ENCODE measurements at regions of chr9 and their contacts with region 1.

Region 1: DNA sequence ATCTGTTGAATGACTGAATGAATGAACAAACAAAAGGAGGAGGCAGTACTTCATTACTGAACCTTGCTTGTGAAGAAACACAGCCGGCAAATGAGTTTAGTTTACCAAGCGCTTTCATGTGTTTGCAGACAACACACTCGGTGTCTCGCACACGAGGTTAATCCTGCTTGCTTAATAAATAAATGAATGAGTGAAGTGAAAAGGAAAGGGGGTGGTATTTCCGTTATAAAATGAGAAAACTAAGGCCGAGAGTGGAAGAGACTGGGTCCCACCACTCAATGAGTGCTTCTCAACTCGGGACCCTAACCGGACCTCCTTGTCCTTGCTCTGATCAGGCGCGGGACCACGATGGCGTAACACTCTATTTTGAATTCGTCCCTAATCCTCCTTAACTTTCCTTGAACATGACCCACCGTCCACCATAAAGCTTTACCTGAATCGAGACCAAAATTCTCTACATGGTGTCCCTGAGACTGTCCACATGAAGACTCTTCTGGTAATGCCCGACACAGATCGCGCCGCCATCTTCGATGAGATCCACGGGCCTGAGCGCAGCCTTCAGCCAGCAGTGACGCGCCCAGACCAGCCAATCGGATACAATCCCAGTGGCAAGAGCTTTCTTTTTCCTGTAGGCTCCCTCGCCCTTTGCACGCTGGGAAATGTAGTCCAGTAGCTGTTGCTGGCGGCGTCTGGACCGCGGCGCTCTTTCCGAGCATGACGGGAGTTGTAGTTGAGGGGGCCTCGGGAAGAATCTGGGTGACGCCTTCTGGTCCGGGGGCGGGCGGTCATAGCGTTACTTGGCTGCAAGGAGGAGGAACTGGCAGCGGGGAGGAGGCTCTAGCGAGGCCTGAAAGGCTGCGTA is at the starts of genes MRPL50 and ZNF189:
- DNase-seq: peak; percentile 88
- ATAC-seq: peak; percentile 96
- H3K4me3 Mint-ChIP-seq: peak within 1 kb of the TSS; percentile 93
- H3K27ac Mint-ChIP-seq: peak within 1 kb of the TSS; percentile 99
- H3K4me1 Mint-ChIP-seq: peaks cover 38% of the 10 kb centered on the region
- H3K27me3 Mint-ChIP-seq: no peaks in the 10 kb centered on the region
- total RNA-seq, gene MRPL50: 11.8 to 12.2 TPM
- total RNA-seq, gene ZNF189: 14.6 to 16.0 TPM

Region 2: DNA sequence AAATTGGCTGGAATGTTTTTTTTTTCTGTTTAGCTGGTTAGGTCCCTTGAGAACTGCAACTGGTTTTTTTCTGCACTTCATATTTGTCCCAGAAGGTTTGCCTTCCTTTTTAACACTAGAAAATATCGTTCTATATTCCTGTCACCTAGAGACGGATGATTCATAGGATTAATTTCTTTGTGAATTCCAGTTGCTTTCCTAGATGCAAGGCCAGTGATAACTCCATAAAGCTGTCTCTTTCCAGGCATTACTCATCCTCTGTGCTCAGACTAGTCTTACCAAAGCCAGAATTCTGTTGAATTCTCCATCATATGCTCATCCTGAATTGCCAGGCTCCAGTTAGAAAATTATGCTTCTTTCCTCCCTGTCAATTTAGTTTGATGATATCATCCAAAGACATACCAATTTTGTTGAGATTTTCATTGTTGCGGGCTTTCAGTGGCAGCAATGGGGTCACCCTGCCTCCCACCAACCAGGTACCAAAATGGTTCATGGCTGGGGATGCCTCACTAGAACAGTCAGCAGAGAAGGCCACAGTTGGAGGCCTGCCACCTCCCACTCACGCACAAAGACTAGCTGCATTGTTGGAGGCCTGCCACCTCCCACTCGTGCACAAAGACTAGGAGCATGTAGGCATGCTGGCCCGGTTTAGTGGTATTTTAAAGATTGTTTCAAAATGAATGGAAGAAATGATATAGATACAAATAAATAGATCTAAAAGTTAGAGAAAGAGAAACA is 22.0 kb before region 1 on chr9:
- POLR2A ChIA-PET with region 1: no interaction called
- DNase-seq: no peak
- ATAC-seq: no peak
- H3K4me3 Mint-ChIP-seq: no peak overlapping the region
- H3K27ac Mint-ChIP-seq: no peak overlapping the region
- H3K4me1 Mint-ChIP-seq: no peaks in the 10 kb centered on the region
- H3K27me3 Mint-ChIP-seq: peaks cover 4% of the 10 kb centered on the region

Region 3: DNA sequence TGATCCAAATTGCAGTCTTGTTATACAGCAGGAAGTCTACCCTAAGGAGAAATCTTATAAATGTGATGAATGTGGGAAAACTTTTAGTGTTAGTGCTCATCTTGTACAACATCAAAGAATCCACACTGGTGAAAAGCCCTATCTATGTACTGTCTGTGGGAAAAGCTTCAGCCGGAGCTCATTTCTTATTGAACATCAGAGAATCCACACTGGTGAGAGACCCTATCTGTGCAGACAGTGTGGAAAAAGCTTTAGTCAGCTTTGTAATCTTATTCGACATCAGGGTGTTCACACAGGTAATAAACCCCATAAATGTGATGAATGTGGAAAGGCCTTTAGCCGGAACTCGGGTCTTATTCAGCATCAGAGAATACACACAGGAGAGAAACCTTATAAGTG is 10.8 kb after region 1 on chr9:
- POLR2A ChIA-PET with region 1: interaction called, 13 read pairs
- DNase-seq: no peak
- ATAC-seq: no peak
- H3K4me3 Mint-ChIP-seq: no peak overlapping the region
- H3K27ac Mint-ChIP-seq: no peak overlapping the region
- H3K4me1 Mint-ChIP-seq: no peaks in the 10 kb centered on the region
- H3K27me3 Mint-ChIP-seq: no peaks in the 10 kb centered on the region

Region 4: DNA sequence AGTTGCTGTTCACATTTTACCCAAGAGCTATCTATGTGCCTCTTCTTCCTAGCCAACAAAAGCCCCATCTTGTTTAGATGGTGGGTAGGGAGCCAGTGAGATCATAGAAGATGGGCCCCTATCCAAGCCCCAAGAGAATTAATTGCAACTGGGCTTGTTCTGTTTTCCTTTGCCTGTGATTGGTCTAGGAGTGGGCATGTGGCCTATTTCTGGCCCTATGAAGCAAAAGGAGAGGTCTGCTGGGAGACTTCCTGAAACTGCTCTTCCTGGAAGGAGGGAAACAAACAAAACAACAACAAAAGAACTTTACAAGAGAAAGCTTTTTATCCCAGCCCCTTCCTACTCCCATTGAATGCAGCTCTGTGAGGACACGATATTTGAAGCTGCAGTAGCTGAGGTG is 69.8 kb after region 1 on chr9:
- POLR2A ChIA-PET with region 1: no interaction called
- DNase-seq: no peak
- ATAC-seq: no peak
- H3K4me3 Mint-ChIP-seq: no peak overlapping the region
- H3K27ac Mint-ChIP-seq: no peak overlapping the region
- H3K4me1 Mint-ChIP-seq: no peaks in the 10 kb centered on the region
- H3K27me3 Mint-ChIP-seq: peaks cover 32% of the 10 kb centered on the region

Region 5: GRCh38 chr9:101533334-101534107 is 135.2 kb after region 1 on chr9 and contains the start of gene RNF20:
- POLR2A ChIA-PET with region 1: interaction called, 14 read pairs
- DNase-seq: peak; percentile 97
- ATAC-seq: peak; percentile 95
- H3K4me3 Mint-ChIP-seq: peak within 1 kb of the TSS; percentile 90
- H3K27ac Mint-ChIP-seq: peak within 1 kb of the TSS; percentile 99
- H3K4me1 Mint-ChIP-seq: peaks cover 14% of the 10 kb centered on the region
- H3K27me3 Mint-ChIP-seq: peaks cover 5% of the 10 kb centered on the region
- total RNA-seq, gene RNF20: 43.7 to 49.0 TPM